CD4-positive, alpha-beta T cell (primary cell): ENCODE measurements at regions of chr9 and their contacts with region 1.

Region 1: DNA sequence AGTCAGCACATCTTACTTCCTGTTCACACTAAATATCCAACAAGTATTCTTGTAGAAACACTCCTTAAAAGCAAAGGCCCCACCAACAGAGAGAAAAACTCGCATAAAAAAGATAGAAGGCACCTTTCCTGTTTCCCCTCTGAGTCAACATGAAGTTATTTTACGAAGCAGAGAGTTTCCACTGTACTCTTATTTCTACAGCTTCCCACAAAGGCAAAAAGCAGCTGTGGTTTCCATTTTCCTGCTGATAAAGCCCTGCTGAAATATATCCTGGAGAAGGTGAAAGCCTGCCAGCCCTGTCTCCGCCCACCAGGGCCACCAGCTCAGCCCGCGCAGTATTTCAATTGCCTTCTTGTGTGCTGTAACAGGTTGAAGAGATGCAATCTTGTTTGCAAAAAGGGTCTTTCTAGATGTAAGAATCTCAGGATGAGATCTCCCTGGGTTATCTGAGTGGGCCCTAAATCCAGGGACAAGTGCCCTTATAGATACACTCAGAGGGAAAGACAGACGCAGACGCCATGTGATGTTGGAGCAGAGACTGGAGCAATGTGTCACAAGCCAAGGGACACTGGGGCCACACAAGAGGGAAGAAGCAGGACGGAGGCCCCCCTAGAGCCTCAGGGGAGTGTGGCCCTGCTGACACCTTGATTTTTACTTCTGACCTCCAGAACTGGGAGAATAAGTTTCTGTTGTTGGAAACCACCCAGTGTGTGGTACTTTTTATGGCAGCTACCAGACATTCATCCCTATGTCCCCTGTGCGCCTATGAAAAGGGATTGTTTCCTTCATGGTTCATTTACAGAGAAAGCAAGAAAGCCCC is 19.9 kb downstream of the SEMA4D start:
- DNase-seq: peak in 10 of 14 experiments; percentile 41 to 79 (median 65)
- ATAC-seq: peak; percentile 55
- H3K4me3 ChIP-seq: peak overlapping the region; percentile 51
- H3K4me3 Mint-ChIP-seq: peak overlapping the region; percentile 85
- H3K27ac ChIP-seq: peak overlapping the region; percentile 54 to 73
- H3K27ac Mint-ChIP-seq: peak overlapping the region; percentile 97
- H3K4me1 ChIP-seq: peaks cover 96% of the 10 kb centered on the region
- H3K4me1 Mint-ChIP-seq: peaks cover 91% of the 10 kb centered on the region
- H3K27me3 ChIP-seq: no peaks in the 10 kb centered on the region
- H3K27me3 Mint-ChIP-seq: no peaks in the 10 kb centered on the region
- CTCF ChIP-seq: no peak

Region 2: GRCh38 chr9:89388084-89388867 is 89.7 kb before region 1 on chr9:
- CTCF ChIA-PET with region 1: no interaction called
- POLR2A ChIA-PET with region 1: no interaction called
- intact Hi-C with region 1: no loop called
- DNase-seq: peak in 3 of 14 experiments; percentile 36 to 72 (median 66)
- ATAC-seq: no peak
- H3K4me3 ChIP-seq: no peak overlapping the region
- H3K4me3 Mint-ChIP-seq: no peak overlapping the region
- H3K27ac ChIP-seq: no peak overlapping the region
- H3K27ac Mint-ChIP-seq: no peak overlapping the region
- H3K4me1 ChIP-seq: peaks cover 5% of the 10 kb centered on the region
- H3K4me1 Mint-ChIP-seq: peaks cover 2% of the 10 kb centered on the region
- H3K27me3 ChIP-seq: no peaks in the 10 kb centered on the region
- H3K27me3 Mint-ChIP-seq: no peaks in the 10 kb centered on the region
- CTCF ChIP-seq: no peak

Region 3: GRCh38 chr9:89442981-89443814 is 34.8 kb before region 1 on chr9:
- CTCF ChIA-PET with region 1: interaction called, 3 read pairs
- POLR2A ChIA-PET with region 1: interaction called, 15 read pairs
- intact Hi-C with region 1: loop called (anchors 2 to 5 kb)
- DNase-seq: peak in 2 of 14 experiments; percentile 49 to 60
- ATAC-seq: no peak
- H3K4me3 ChIP-seq: no peak overlapping the region
- H3K4me3 Mint-ChIP-seq: no peak overlapping the region
- H3K27ac ChIP-seq: peak overlapping the region; percentile 66 to 71
- H3K27ac Mint-ChIP-seq: peak overlapping the region; percentile 96
- H3K4me1 ChIP-seq: peaks cover 99% of the 10 kb centered on the region
- H3K4me1 Mint-ChIP-seq: peaks cover 86% of the 10 kb centered on the region
- H3K27me3 ChIP-seq: no peaks in the 10 kb centered on the region
- H3K27me3 Mint-ChIP-seq: no peaks in the 10 kb centered on the region
- CTCF ChIP-seq: no peak

Region 4: GRCh38 chr9:89461265-89461664 is 16.8 kb before region 1 on chr9:
- CTCF ChIA-PET with region 1: interaction called, 4 read pairs
- POLR2A ChIA-PET with region 1: interaction called, 44 read pairs
- intact Hi-C with region 1: loop called (anchors 2 kb)
- DNase-seq: peak in 4 of 14 experiments; percentile 28 to 63 (median 56)
- ATAC-seq: peak; percentile 14
- H3K4me3 ChIP-seq: no peak overlapping the region
- H3K4me3 Mint-ChIP-seq: peak overlapping the region; percentile 71
- H3K27ac ChIP-seq: peak overlapping the region; percentile 50 to 62
- H3K27ac Mint-ChIP-seq: peak overlapping the region; percentile 96
- H3K4me1 ChIP-seq: peaks cover 97% of the 10 kb centered on the region
- H3K4me1 Mint-ChIP-seq: peaks cover 97% of the 10 kb centered on the region
- H3K27me3 ChIP-seq: no peaks in the 10 kb centered on the region
- H3K27me3 Mint-ChIP-seq: no peaks in the 10 kb centered on the region
- CTCF ChIP-seq: no peak

Region 5: DNA sequence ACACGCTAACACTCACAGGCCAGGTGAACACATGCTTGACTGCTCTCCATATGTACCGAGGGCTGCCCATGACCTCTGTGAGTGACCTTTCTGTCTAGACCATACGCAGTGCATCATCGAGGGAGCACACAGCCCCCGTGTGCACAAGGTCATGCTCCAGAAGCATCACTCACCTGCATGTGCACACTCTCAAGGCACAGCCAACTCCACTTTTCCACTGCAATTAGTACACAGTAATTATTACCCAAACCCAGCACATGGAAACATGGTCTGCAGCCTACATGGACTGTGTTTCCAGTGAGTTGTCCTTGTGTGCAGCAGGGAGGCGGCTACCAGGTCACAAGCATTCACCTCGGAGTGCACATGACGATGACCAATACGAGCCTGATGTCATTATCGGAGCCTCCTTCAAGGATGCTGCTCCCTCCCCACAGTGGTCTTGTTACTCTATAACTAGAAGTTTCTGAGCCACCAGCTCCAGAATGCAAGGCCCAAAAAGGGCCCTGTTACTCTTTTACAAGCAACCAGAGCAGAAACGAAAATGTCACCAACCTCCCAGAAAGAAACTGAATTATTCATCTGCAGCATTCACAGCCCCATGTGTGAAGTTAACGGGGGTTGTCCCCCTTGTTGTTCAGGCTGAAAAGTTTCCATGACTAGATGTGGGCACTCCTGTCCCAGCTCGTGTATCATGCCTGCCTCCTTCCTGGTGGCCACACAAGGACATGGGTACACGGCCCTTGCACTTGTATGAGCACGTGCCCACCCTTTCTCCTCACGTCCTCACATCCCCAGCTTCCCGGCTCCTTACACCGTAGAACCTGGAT is 11.4 kb before region 1 on chr9:
- CTCF ChIA-PET with region 1: interaction called, 3 read pairs
- POLR2A ChIA-PET with region 1: interaction called, 23 read pairs
- intact Hi-C with region 1: loop called (anchors 1 to 2 kb)
- DNase-seq: peak in 2 of 14 experiments; percentile 43 to 52
- ATAC-seq: peak; percentile 2
- H3K4me3 ChIP-seq: peak overlapping the region; percentile 12
- H3K4me3 Mint-ChIP-seq: peak overlapping the region; percentile 76
- H3K27ac ChIP-seq: peak overlapping the region; percentile 64 to 84
- H3K27ac Mint-ChIP-seq: peak overlapping the region; percentile 96
- H3K4me1 ChIP-seq: peaks cover 93% of the 10 kb centered on the region
- H3K4me1 Mint-ChIP-seq: peaks cover 97% of the 10 kb centered on the region
- H3K27me3 ChIP-seq: no peaks in the 10 kb centered on the region
- H3K27me3 Mint-ChIP-seq: no peaks in the 10 kb centered on the region
- CTCF ChIP-seq: no peak

Region 6: GRCh38 chr9:89489548-89490530 is 11.8 kb after region 1 on chr9:
- CTCF ChIA-PET with region 1: interaction called, 3 read pairs
- POLR2A ChIA-PET with region 1: interaction called, 7 read pairs
- intact Hi-C with region 1: loop called (anchors 1 to 2 kb)
- DNase-seq: peak in 4 of 14 experiments; percentile 33 to 92 (median 89)
- ATAC-seq: peak; percentile 84
- H3K4me3 ChIP-seq: peak overlapping the region; percentile 0
- H3K4me3 Mint-ChIP-seq: peak overlapping the region; percentile 76
- H3K27ac ChIP-seq: peak overlapping the region; percentile 65 to 67
- H3K27ac Mint-ChIP-seq: peak overlapping the region; percentile 88
- H3K4me1 ChIP-seq: peaks cover 76% of the 10 kb centered on the region
- H3K4me1 Mint-ChIP-seq: peaks cover 92% of the 10 kb centered on the region
- H3K27me3 ChIP-seq: no peaks in the 10 kb centered on the region
- H3K27me3 Mint-ChIP-seq: no peaks in the 10 kb centered on the region
- CTCF ChIP-seq: no peak